ENCODE measurements at regions of chr12 and their contacts with region 1.

Region 1: DNA sequence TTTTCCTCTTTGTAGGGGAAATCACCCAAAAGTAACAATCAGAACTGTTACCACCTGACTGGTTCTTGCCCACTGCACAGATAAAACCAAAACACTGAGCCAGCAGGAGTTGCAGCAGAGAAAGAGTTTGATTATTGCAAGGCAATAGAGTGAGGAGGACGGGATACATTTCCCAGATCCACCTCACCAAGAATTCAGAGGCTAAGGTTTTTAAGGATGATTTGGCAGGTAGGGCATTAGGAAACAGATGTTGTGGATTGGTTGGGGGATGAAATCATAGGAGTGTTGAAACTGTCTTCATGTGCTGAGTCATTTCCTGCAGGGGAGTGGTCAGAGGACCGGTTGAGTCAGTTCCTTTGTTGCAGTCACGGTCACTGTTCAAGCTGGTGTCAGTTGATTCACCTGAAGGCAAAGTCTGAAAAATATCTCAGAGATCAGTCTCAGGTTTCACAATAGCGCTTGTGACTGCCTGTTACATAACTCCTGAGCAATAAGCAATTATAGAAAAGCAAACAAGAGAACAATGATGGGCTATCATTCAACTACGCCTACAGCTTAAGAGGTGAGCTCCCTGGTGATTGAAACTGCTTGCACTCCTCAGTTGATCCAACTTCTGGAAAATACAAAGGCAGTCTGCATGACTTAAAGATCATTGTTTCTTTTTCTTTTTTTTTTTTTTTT is 20.3 kb upstream of the AMN1 start:
- DNase-seq: peak; percentile 67
- H3K4me3 Mint-ChIP-seq: no peak overlapping the region
- H3K27ac Mint-ChIP-seq: peak overlapping the region; percentile 5
- H3K4me1 Mint-ChIP-seq: peaks cover 23% of the 10 kb centered on the region
- H3K27me3 Mint-ChIP-seq: peaks cover 20% of the 10 kb centered on the region

Region 2: DNA sequence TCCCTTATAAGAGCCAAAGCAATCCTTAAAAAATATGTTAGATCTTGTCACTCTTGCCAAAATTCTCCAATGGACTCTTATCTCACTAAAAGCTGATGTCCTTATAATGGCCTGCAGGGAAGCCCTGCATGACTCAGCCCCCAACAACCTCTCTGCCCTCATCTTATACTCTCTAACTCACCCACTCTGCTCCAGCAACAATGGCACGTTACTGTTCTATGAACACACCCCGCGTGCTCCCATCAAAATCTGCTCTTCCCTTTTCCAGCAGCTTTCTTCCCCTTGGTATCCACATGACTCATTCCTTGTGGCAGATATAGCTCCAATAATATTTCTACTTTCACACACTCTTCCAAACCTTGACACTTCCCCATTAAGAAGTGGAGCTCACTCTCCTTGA is 266.3 kb before region 1 on chr12:
- intact Hi-C with region 1: no loop called
- DNase-seq: no peak
- H3K4me3 Mint-ChIP-seq: no peak overlapping the region
- H3K27ac Mint-ChIP-seq: no peak overlapping the region
- H3K4me1 Mint-ChIP-seq: no peaks in the 10 kb centered on the region
- H3K27me3 Mint-ChIP-seq: peaks cover 2% of the 10 kb centered on the region

Region 3: GRCh38 chr12:31659087-31659933 is 89.9 kb before region 1 on chr12 and contains the start of gene ETFBKMT:
- intact Hi-C with region 1: loop called (anchors 5 kb)
- DNase-seq: peak; percentile 95
- H3K4me3 Mint-ChIP-seq: peak within 1 kb of the TSS; percentile 95
- H3K27ac Mint-ChIP-seq: peak within 1 kb of the TSS; percentile 97
- H3K4me1 Mint-ChIP-seq: peaks cover 5% of the 10 kb centered on the region
- H3K27me3 Mint-ChIP-seq: no peaks in the 10 kb centered on the region
- total RNA-seq, gene ETFBKMT: 0.37 and 0.39 TPM in 2 replicates

Region 4: DNA sequence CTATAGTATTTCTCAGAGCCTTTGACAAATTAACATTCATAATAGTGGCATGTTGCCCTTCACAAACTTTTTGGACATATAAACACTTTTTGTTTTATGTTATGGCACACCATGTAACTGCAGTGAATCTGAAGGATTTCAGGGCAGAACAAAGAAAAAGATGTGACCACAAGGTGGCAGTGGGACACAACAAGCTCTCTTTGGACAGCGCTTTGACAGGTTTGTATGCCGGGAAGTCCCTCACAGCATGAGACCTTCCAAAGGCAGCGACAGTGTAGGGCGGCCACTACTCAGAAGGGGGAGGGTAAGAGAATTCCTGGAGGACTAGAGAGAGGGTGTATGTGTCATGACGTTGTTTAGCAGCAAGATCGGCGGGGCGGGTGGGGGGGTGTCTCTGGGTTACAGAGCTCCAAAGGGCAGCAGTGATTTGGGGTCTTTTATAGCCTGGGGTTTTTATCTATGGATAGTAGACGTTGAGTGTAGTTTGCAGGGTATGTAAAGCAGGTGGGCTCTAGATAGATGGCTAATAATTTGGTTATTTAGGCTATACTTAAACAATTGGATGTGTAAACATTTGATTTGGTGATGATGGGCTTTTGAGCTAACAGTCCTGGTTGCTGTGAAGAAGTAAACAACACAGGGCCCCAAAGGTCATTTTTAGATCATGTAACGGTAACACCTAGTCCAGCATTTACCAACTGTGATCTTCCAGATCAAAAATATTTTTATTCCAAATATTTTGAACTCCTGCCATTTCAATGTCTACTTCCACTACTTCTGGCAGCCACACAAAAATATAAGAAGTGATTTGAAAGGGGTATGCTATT is 66.8 kb before region 1 on chr12:
- intact Hi-C with region 1: loop called (anchors 5 kb)
- DNase-seq: peak; percentile 46
- H3K4me3 Mint-ChIP-seq: no peak overlapping the region
- H3K27ac Mint-ChIP-seq: no peak overlapping the region
- H3K4me1 Mint-ChIP-seq: peaks cover 5% of the 10 kb centered on the region
- H3K27me3 Mint-ChIP-seq: no peaks in the 10 kb centered on the region

Region 5: GRCh38 chr12:31728917-31729640 is 20.1 kb before region 1 on chr12 and contains the start of gene AMN1:
- intact Hi-C with region 1: loop called (anchors 1 kb)
- DNase-seq: peak; percentile 100
- H3K4me3 Mint-ChIP-seq: peak within 1 kb of the TSS; percentile 98
- H3K27ac Mint-ChIP-seq: peak within 1 kb of the TSS; percentile 99
- H3K4me1 Mint-ChIP-seq: peaks cover 35% of the 10 kb centered on the region
- H3K27me3 Mint-ChIP-seq: no peaks in the 10 kb centered on the region
- total RNA-seq, gene AMN1: 1.8 and 2.8 TPM in 2 replicates

Region 6: GRCh38 chr12:31736472-31736871 is 12.7 kb before region 1 on chr12:
- intact Hi-C with region 1: loop called (anchors 1 kb)
- DNase-seq: peak; percentile 60
- H3K4me3 Mint-ChIP-seq: no peak overlapping the region
- H3K27ac Mint-ChIP-seq: peak overlapping the region; percentile 70
- H3K4me1 Mint-ChIP-seq: peaks cover 49% of the 10 kb centered on the region
- H3K27me3 Mint-ChIP-seq: no peaks in the 10 kb centered on the region

Region 7: GRCh38 chr12:31804185-31804504 is 55.0 kb after region 1 on chr12:
- intact Hi-C with region 1: loop called (anchors 5 kb)
- DNase-seq: no peak
- H3K4me3 Mint-ChIP-seq: peak overlapping the region; percentile 30
- H3K27ac Mint-ChIP-seq: peak overlapping the region; percentile 40
- H3K4me1 Mint-ChIP-seq: peaks cover 28% of the 10 kb centered on the region
- H3K27me3 Mint-ChIP-seq: peaks cover 3% of the 10 kb centered on the region

Region 8: GRCh38 chr12:31874961-31875608 is 125.9 kb after region 1 on chr12:
- intact Hi-C with region 1: loop called (anchors 5 kb)
- DNase-seq: peak; percentile 35
- H3K4me3 Mint-ChIP-seq: no peak overlapping the region
- H3K27ac Mint-ChIP-seq: peak overlapping the region; percentile 100
- H3K4me1 Mint-ChIP-seq: peaks cover 19% of the 10 kb centered on the region
- H3K27me3 Mint-ChIP-seq: no peaks in the 10 kb centered on the region

Measured in activated T-helper 2 cell treated with anti-CD3 and anti-CD28 coated beads, Interferon-gamma antibody, Interleukin-2, Interleukin-4, amounts not matched to agents 10 μg/mL and 5 μg/mL and 100 μg/mL, durations not matched to agents 14 hours and 24 hours and 36 hours (primary cell).